ENCODE measurements at regions of chr2 and their contacts with region 1.

Region 1: GRCh38 chr2:30146438-30147147 is at the start of gene YPEL5:
- DNase-seq: peak; percentile 99
- H3K4me3 Mint-ChIP-seq: peak within 1 kb of the TSS; percentile 82
- H3K27ac Mint-ChIP-seq: peak within 1 kb of the TSS; percentile 95
- H3K4me1 Mint-ChIP-seq: peaks cover 51% of the 10 kb centered on the region
- H3K27me3 Mint-ChIP-seq: no peaks in the 10 kb centered on the region
- total RNA-seq, gene YPEL5: 43.3 to 43.4 TPM

Region 2: GRCh38 chr2:29014811-29015421 is 1131.7 kb before region 1 on chr2:
- CTCF ChIA-PET with region 1: no interaction called
- POLR2A ChIA-PET with region 1: no interaction called
- intact Hi-C with region 1: loop called (anchors 10 kb)
- DNase-seq: peak; percentile 87
- H3K4me3 Mint-ChIP-seq: peak overlapping the region; percentile 79
- H3K27ac Mint-ChIP-seq: peak overlapping the region; percentile 95
- H3K4me1 Mint-ChIP-seq: peaks cover 89% of the 10 kb centered on the region
- H3K27me3 Mint-ChIP-seq: no peaks in the 10 kb centered on the region

Region 3: GRCh38 chr2:29309090-29310029 is 837.2 kb before region 1 on chr2:
- CTCF ChIA-PET with region 1: no interaction called
- POLR2A ChIA-PET with region 1: no interaction called
- intact Hi-C with region 1: loop called (anchors 10 kb)
- DNase-seq: peak; percentile 41
- H3K4me3 Mint-ChIP-seq: no peak overlapping the region
- H3K27ac Mint-ChIP-seq: no peak overlapping the region
- H3K4me1 Mint-ChIP-seq: peaks cover 2% of the 10 kb centered on the region
- H3K27me3 Mint-ChIP-seq: peaks cover 21% of the 10 kb centered on the region

Region 4: DNA sequence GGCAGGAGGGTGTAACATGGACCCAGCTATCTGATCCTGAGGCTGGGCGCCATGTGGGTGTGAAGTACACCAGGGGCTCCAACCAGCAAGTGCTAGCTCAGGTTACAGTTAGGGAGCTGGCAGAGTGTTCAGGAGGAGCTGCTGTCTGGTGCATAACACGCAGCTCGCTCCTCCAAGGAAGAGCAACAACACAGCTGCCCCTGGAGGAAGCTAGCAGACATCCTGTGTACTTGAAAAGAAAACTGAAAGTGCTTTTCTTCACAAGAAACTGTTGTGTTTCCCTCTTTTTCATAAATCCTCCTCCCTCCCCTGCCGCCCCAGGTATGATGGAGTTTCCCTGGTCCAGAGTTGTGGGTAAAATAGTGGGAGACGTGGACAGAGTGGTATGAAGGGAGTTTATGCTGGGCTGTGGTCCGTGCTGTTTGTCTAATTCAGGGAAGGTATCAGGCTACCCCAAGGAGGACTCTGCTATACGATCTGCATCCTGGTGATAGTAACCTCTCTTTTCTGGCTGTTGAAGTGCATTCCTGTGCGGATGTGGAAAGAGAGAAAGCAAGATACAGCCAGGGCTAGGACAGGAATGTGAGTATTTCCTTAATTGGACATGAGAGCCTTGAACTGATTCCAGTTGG is 78.7 kb after region 1 on chr2:
- CTCF ChIA-PET with region 1: interaction called, 8 read pairs
- POLR2A ChIA-PET with region 1: interaction called, 43 read pairs
- intact Hi-C with region 1: no loop called
- DNase-seq: peak; percentile 62
- H3K4me3 Mint-ChIP-seq: peak overlapping the region; percentile 83
- H3K27ac Mint-ChIP-seq: peak overlapping the region; percentile 97
- H3K4me1 Mint-ChIP-seq: peaks cover 70% of the 10 kb centered on the region
- H3K27me3 Mint-ChIP-seq: no peaks in the 10 kb centered on the region

Region 5: GRCh38 chr2:30336978-30337841 is 190.6 kb after region 1 on chr2:
- CTCF ChIA-PET with region 1: no interaction called
- POLR2A ChIA-PET with region 1: interaction called, 3 read pairs
- intact Hi-C with region 1: loop called (anchors 1 kb)
- DNase-seq: peak; percentile 83
- H3K4me3 Mint-ChIP-seq: peak overlapping the region; percentile 68
- H3K27ac Mint-ChIP-seq: peak overlapping the region; percentile 96
- H3K4me1 Mint-ChIP-seq: peaks cover 75% of the 10 kb centered on the region
- H3K27me3 Mint-ChIP-seq: no peaks in the 10 kb centered on the region

Region 6: DNA sequence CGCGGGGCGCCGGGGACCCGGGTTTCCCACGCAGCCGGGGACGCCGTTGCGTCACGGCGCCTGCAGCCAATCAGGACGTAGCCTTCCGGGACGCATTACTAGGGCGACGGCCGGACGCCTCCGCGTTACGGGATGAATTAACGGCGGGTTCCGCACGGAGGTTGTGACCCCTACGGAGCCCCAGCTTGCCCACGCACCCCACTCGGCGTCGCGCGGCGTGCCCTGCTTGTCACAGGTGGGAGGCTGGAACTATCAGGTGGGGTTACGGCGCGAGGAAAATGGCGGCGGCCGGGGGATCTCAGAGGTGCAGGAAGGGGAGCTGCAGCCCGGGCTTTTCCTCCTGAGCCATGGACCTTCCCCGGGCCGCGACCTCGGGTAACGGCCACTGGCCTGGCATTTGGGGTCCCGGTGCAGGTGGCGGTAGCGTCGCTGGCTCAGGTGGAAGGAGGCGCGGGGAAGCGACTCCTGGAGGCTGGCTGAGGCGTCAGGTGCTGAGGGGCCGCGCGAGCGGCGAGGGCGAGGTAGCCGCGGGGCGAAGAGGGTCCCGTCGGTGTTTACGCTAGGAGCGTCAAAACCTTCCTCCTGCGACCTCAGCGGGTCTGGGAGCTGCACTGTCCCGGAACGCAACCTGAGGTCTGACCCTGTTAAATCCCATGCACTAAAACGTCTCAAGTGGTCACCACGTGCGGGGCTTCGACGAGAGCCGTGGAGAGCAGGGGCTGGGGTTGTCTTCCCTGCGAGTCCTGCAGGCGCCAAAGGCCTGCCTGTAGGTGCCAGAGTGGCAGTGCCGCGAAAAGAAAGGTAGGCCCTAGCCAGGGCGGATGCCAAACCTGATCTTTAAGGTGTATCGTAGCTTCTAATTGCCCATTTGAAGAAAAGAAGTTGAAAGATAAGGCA is 300.8 kb after region 1 on chr2 and contains the start of gene LCLAT1:
- CTCF ChIA-PET with region 1: no interaction called
- POLR2A ChIA-PET with region 1: interaction called, 10 read pairs
- intact Hi-C with region 1: loop called (anchors 5 kb)
- DNase-seq: peak; percentile 90
- H3K4me3 Mint-ChIP-seq: peak within 1 kb of the TSS; percentile 88
- H3K27ac Mint-ChIP-seq: peak within 1 kb of the TSS; percentile 95
- H3K4me1 Mint-ChIP-seq: peaks cover 24% of the 10 kb centered on the region
- H3K27me3 Mint-ChIP-seq: no peaks in the 10 kb centered on the region
- total RNA-seq, gene LCLAT1: 21.5 to 24.3 TPM

Region 7: GRCh38 chr2:30591186-30591585 is 444.6 kb after region 1 on chr2:
- CTCF ChIA-PET with region 1: no interaction called
- POLR2A ChIA-PET with region 1: no interaction called
- intact Hi-C with region 1: no loop called
- DNase-seq: no peak
- H3K4me3 Mint-ChIP-seq: no peak overlapping the region
- H3K27ac Mint-ChIP-seq: no peak overlapping the region
- H3K4me1 Mint-ChIP-seq: no peaks in the 10 kb centered on the region
- H3K27me3 Mint-ChIP-seq: no peaks in the 10 kb centered on the region